ENCODE measurements at regions of chr5 and their contacts with region 1.

Region 1: DNA sequence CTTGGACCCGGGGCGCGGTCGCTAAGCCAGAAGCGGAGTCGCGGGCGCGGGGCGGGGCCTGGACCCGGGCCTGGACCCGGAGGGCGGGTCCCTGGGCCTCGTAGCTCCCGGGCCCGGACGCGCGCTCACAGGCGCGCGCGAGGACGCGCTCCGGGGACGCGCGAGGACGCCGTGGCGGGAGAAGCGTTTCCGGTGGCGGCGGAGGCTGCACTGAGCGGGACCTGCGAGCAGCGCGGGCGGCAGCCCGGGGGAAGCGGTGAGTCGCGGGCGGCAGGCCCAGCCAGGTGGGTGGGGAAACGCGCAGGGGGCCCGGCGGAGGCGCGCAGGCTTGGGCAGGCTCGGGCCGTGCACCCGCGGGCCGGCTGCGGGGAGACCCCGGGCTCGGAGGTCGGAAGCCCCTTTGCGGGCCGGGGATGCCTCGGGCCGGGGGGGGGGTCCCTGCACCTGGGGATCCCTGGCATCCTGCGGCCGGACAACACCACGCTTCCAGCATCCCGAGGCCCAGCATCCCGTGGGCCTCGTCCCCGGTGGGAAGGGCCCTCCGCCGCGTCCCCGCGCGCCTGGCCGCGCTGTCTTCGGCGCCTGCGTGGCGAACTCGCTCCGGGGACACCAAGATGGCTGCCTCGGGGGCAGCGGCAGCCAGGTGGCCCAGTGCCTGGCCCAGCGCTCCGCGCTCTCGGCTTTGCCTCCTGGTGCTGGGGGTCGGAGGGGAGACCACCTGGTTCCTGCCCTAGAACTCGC is at the start of gene SFXN1:
- DNase-seq: peak; percentile 96
- H3K4me3 Mint-ChIP-seq: peak within 1 kb of the TSS; percentile 95
- H3K27ac Mint-ChIP-seq: peak within 1 kb of the TSS; percentile 94
- H3K4me1 Mint-ChIP-seq: peaks cover 49% of the 10 kb centered on the region
- H3K27me3 Mint-ChIP-seq: peaks cover 11% of the 10 kb centered on the region
- total RNA-seq, gene SFXN1: 390 and 404 TPM in 2 replicates

Region 2: DNA sequence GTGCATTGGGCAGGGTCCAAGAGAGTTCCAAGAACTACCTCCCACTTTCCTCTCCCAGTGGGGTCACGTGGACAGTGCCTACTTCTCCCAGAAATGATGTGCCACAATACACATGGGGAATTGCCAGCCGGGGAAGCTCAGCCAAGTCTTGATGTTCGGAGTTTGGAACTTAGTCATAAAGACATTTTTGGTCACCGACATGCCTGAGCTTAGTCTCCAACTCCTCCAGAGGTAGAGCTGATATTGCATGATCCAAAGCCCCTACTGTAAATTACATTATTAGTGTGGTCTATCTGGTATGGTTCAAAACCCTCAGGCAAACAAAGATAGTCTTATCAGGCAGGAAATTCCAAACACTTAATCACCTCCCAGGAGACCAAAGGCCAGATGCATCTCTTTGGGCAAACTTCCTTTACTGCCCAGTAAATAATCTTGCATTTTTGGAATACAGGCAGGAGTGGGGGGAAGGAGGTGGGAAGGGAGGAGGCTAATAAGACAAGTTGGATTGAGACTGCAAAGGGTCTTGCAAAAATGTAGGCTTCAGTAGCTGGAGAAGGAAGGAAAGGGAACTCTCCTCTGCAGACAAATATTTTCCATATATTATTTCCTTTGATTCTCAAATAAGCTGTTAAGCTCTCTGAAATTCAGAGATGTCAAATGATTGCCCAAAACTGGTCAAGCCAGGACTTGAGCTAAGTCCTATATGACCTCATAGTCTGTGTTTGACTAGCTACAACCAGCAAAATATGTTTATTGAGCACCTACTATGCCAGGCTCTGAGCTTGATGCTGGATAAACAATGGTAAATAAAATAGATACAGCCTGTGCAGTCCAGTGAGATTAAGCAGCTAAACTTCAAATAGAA is 134.0 kb before region 1 on chr5:
- intact Hi-C with region 1: no loop called
- DNase-seq: no peak
- H3K4me3 Mint-ChIP-seq: no peak overlapping the region
- H3K27ac Mint-ChIP-seq: no peak overlapping the region
- H3K4me1 Mint-ChIP-seq: no peaks in the 10 kb centered on the region
- H3K27me3 Mint-ChIP-seq: peaks cover 2% of the 10 kb centered on the region

Region 3: DNA sequence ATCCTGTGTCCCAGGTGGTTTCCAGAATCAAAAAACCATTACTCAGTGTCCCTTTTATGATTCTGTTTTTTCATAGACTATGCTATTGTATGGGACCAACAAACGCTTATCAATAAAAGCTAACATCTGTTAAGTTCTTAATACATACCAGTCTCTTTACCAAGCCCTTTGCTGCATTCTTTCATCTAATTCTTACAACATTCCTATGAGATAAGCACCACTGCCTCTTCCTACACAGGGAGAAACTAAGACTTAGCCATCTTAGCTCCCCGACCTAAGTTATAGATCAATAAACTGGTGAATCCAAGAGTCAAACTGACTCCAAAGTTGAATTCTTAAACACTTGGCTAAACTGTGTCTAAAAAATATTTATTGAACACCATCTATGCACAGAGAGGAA is 61.2 kb before region 1 on chr5:
- intact Hi-C with region 1: no loop called
- DNase-seq: no peak
- H3K4me3 Mint-ChIP-seq: no peak overlapping the region
- H3K27ac Mint-ChIP-seq: no peak overlapping the region
- H3K4me1 Mint-ChIP-seq: no peaks in the 10 kb centered on the region
- H3K27me3 Mint-ChIP-seq: peaks cover 8% of the 10 kb centered on the region

Region 4: DNA sequence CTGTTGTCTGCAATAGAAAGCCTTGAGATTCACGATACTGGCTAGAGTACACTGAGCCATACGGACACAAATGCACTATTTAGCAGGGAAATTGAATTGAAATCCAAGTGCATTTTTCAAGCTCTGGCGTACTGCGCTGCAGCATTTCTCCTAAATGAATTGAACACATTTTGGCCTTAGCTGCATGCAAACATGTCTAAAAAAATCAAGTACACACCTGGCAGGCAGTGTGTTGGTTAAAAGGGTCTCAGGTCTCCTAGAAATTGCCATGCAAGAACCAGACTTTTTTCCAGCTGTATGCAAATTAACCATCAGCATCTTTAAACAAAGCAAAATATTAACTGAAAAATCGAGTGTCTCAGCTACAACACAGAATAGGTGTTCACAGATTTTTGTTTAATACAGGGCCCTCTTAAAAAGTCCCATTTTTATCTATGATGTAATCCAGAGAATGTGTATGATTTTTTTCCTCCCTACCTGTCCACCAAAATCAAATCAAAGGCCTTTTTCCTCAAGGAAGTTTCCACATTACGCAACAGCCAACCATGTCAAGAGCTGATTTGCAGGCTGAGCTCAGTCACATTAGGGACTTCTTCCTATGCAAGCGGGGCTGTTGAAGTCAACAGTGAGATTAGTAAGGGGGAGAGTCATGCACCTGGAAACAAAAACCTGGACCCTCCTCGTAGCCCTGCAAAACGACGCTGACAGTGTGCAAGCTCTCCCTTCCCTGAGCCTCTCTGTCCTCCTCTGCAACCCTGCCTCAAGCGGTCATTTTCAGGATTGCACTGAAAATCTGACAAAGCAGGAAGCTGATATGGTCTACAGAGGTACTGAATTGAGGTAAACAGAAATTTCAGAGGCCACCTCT is 14.2 kb before region 1 on chr5:
- intact Hi-C with region 1: loop called (anchors 2 kb)
- DNase-seq: peak; percentile 93
- H3K4me3 Mint-ChIP-seq: no peak overlapping the region
- H3K27ac Mint-ChIP-seq: peak overlapping the region; percentile 34
- H3K4me1 Mint-ChIP-seq: peaks cover 10% of the 10 kb centered on the region
- H3K27me3 Mint-ChIP-seq: peaks cover 3% of the 10 kb centered on the region

Region 5: GRCh38 chr5:175494280-175495183 is 16.0 kb after region 1 on chr5:
- intact Hi-C with region 1: loop called (anchors 2 kb)
- DNase-seq: no peak
- H3K4me3 Mint-ChIP-seq: peak overlapping the region; percentile 37
- H3K27ac Mint-ChIP-seq: peak overlapping the region; percentile 76
- H3K4me1 Mint-ChIP-seq: peaks cover 34% of the 10 kb centered on the region
- H3K27me3 Mint-ChIP-seq: no peaks in the 10 kb centered on the region

Region 6: GRCh38 chr5:175517818-175518450 is 39.4 kb after region 1 on chr5:
- intact Hi-C with region 1: loop called (anchors 1 kb)
- DNase-seq: peak; percentile 91
- H3K4me3 Mint-ChIP-seq: peak overlapping the region; percentile 73
- H3K27ac Mint-ChIP-seq: peak overlapping the region; percentile 95
- H3K4me1 Mint-ChIP-seq: peaks cover 79% of the 10 kb centered on the region
- H3K27me3 Mint-ChIP-seq: peaks cover 2% of the 10 kb centered on the region